ENCODE measurements at regions of chr11 and their contacts with region 1.

Region 1: GRCh38 chr11:96168623-96169022 is 174.4 kb downstream of the MAML2 start:
- DNase-seq: peak in 3 of 5 donors; percentile 18 to 38 (median 32)
- ATAC-seq: peak; percentile 39 to 89 (median 80)
- H3K4me3 ChIP-seq: no peak overlapping the region
- H3K27ac ChIP-seq: peak overlapping the region in 9 of 12 donors; percentile 12 to 82 (median 36)
- H3K4me1 ChIP-seq: peaks cover 0 to 61% (median 15%) of the 10 kb centered on the region in 12 donors
- H3K27me3 ChIP-seq: no peaks in the 10 kb centered on the region
- CTCF ChIP-seq: no peak
- POLR2A ChIP-seq: no peak

Region 2: GRCh38 chr11:96199563-96200025 is 31.0 kb after region 1 on chr11:
- intact Hi-C with region 1: loop called in 1 of 10 experiments (anchors 5 kb)
- DNase-seq: no peak
- ATAC-seq: peak in 2 of 4 donors; percentile 41 to 69
- H3K4me3 ChIP-seq: no peak overlapping the region
- H3K27ac ChIP-seq: peak overlapping the region in 10 of 12 donors; percentile 10 to 71 (median 46)
- H3K4me1 ChIP-seq: peaks cover 0 to 52% (median 14%) of the 10 kb centered on the region in 12 donors
- H3K27me3 ChIP-seq: no peaks in the 10 kb centered on the region
- CTCF ChIP-seq: no peak
- POLR2A ChIP-seq: no peak

Region 3: GRCh38 chr11:96215110-96215782 is 46.6 kb after region 1 on chr11:
- intact Hi-C with region 1: loop called in 3 of 10 experiments (anchors 10 kb)
- DNase-seq: no peak
- ATAC-seq: peak; percentile 22 to 49 (median 43)
- H3K4me3 ChIP-seq: no peak overlapping the region
- H3K27ac ChIP-seq: peak overlapping the region; percentile 33 to 92 (median 68)
- H3K4me1 ChIP-seq: peaks cover 4 to 95% (median 64%) of the 10 kb centered on the region in 12 donors
- H3K27me3 ChIP-seq: no peaks in the 10 kb centered on the region
- CTCF ChIP-seq: no peak
- POLR2A ChIP-seq: no peak